Esophagus muscularis mucosa (tissue), 4 donors: ENCODE measurements at regions of chrX and their contacts with region 1.

Region 1: DNA sequence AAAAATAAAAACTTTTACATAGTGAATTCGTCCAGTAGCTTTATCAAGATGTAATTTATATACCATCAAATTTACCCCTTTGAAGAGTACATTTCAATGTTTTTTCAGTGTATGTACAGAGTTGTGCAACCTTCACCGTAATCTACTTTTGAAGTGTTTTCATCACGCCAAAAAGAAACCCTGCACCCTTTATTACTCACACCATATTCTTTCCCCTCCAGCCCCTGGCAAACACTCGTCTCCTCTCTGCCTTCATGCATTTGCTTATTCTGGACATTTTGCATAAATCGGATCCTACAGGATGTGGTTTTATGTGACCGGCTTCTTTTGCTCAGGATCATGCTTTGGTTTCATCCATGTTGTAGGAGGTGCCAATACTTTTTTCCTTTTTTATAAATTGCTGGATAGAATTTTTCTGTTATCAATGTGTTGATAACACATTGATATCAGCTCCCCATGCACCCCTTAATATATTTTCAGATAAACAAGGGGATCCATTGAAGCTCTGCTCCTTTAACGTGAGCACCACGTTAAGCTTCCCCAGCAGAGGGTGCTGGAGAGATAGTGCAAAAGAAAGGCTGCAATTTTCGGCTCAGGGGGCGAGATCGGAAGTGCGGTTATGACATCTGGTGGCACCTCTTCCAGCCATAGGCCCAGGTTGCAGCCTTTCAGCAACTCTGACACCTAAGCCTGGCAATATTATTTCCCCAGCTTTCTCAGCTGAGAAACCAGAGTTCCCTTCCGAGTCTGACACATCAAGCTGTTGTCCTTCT is 100.1 kb upstream of the VCX3B start:
- DNase-seq: no peak
- H3K4me3 ChIP-seq: no peak overlapping the region
- H3K27ac ChIP-seq: no peak overlapping the region
- H3K4me1 ChIP-seq: peaks cover 0 to 4% (median 0%) of the 10 kb centered on the region in 4 donors
- H3K27me3 ChIP-seq: no peaks in the 10 kb centered on the region
- CTCF ChIP-seq: peak; percentile 33 to 47 (median 33)
- EP300 ChIP-seq: no peak
- POLR2A ChIP-seq: no peak

Region 2: GRCh38 chrX:8738588-8739189 is 374.1 kb after region 1 on chrX:
- intact Hi-C with region 1: loop called (anchors 10 kb)
- DNase-seq: no peak
- H3K4me3 ChIP-seq: no peak overlapping the region
- H3K27ac ChIP-seq: no peak overlapping the region
- H3K4me1 ChIP-seq: no peaks in the 10 kb centered on the region
- H3K27me3 ChIP-seq: no peaks in the 10 kb centered on the region
- CTCF ChIP-seq: peak; percentile 56 to 59 (median 56)
- EP300 ChIP-seq: no peak
- POLR2A ChIP-seq: no peak